ENCODE measurements at regions of chrX and their contacts with region 1.

Region 1: GRCh38 chrX:154051201-154051810 is 31.6 kb upstream of the IRAK1 start:
- DNase-seq: peak; percentile 60 to 70 (median 63)
- H3K4me3 ChIP-seq: no peak overlapping the region
- H3K4me3 Mint-ChIP-seq: peak overlapping the region in 2 of 8 donors; percentile 1 to 32
- H3K27ac ChIP-seq: no peak overlapping the region
- H3K27ac Mint-ChIP-seq: peak overlapping the region in 6 of 7 donors; percentile 28 to 89 (median 64)
- H3K4me1 ChIP-seq: peaks cover 23% of the 10 kb centered on the region
- H3K4me1 Mint-ChIP-seq: peaks cover 20 to 57% (median 40%) of the 10 kb centered on the region in 4 donors
- H3K27me3 ChIP-seq: no peaks in the 10 kb centered on the region
- H3K27me3 Mint-ChIP-seq: no peaks in the 10 kb centered on the region

Region 2: GRCh38 chrX:153763989-153764755 is 287.1 kb before region 1 on chrX and contains the start of gene PLXNB3:
- CTCF ChIA-PET with region 1: no interaction called
- POLR2A ChIA-PET with region 1: no interaction called
- intact Hi-C with region 1: loop called (anchors 1 kb)
- DNase-seq: peak; percentile 56 to 76 (median 69)
- H3K4me3 ChIP-seq: no peak within 1 kb of the TSS
- H3K4me3 Mint-ChIP-seq: no peak within 1 kb of the TSS
- H3K27ac ChIP-seq: no peak within 1 kb of the TSS
- H3K27ac Mint-ChIP-seq: peak within 1 kb of the TSS in 1 of 7 donors; percentile 42
- H3K4me1 ChIP-seq: no peaks in the 10 kb centered on the region
- H3K4me1 Mint-ChIP-seq: peaks cover 4 to 10% (median 7%) of the 10 kb centered on the region in 4 donors
- H3K27me3 ChIP-seq: no peaks in the 10 kb centered on the region
- H3K27me3 Mint-ChIP-seq: no peaks in the 10 kb centered on the region
- total RNA-seq, gene PLXNB3: not detected

Measured in CD4-positive, alpha-beta memory T cell (primary cell).